Tibial artery (tissue), 4 donors: ENCODE measurements at regions of chr3 and their contacts with region 1.

Region 1: DNA sequence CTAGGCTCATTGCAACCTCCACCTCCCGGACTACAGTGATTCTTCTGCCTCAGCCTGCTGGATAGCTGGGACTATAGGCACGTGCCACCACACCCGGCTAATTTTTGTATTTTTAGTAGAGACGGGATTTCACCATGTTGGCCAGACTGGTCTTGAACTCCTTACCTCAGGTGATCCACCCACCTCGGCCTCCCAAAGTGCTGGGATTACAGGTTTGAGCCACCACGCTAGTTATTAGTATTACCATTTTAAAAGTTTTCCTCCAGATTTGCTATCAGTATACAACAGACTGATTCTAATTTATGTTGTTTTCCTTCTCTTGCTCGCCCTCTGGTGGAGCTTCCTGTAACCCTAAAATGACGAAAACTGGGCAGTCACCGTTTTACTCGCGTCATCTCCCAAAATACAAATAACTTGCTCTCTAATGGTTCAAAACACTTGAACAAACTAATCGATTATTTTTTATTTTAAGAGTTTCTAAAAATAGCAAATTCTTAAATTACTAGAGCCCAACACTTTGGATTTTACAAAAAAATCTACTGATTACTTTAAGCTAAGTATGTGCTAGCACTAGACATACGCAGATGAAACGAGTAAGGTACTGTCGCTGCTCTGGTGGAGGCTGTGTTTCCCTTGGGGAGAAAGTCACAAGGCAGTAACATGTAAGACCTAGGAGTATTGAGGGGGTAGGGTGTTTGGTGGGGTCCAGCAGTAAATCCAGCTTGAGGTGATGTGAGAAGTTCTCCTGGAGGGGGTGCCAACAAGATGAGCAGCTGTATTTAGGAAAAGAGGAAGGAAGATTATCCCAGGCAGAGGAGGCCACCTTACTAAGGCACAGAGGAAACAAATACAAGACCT is 203.3 kb downstream of the MBNL1 start:
- DNase-seq: peak; percentile 80 to 81
- H3K4me3 ChIP-seq: peak overlapping the region; percentile 29 to 34
- H3K27ac ChIP-seq: peak overlapping the region; percentile 39 to 72
- H3K4me1 ChIP-seq: peaks cover 0 to 18% (median 7%) of the 10 kb centered on the region in 4 donors
- H3K27me3 ChIP-seq: no peaks in the 10 kb centered on the region
- CTCF ChIP-seq: peak; percentile 74 to 79

Region 2: GRCh38 chr3:152524198-152525140 is 52.4 kb after region 1 on chr3:
- intact Hi-C with region 1: loop called (anchors 10 kb)
- DNase-seq: peak in 1 of 2 donors; percentile 58
- H3K4me3 ChIP-seq: no peak overlapping the region
- H3K27ac ChIP-seq: no peak overlapping the region
- H3K4me1 ChIP-seq: peaks cover 0 to 4% (median 0%) of the 10 kb centered on the region in 4 donors
- H3K27me3 ChIP-seq: no peaks in the 10 kb centered on the region
- CTCF ChIP-seq: peak; percentile 83 to 86

Region 3: GRCh38 chr3:152671446-152672319 is 199.6 kb after region 1 on chr3:
- intact Hi-C with region 1: no loop called
- DNase-seq: no peak
- H3K4me3 ChIP-seq: no peak overlapping the region
- H3K27ac ChIP-seq: no peak overlapping the region
- H3K4me1 ChIP-seq: no peaks in the 10 kb centered on the region
- H3K27me3 ChIP-seq: peaks cover 0 to 3% of the 10 kb centered on the region in 2 donors
- CTCF ChIP-seq: no peak

Region 4: GRCh38 chr3:152688313-152688712 is 216.3 kb after region 1 on chr3:
- intact Hi-C with region 1: no loop called
- DNase-seq: no peak
- H3K4me3 ChIP-seq: no peak overlapping the region
- H3K27ac ChIP-seq: no peak overlapping the region
- H3K4me1 ChIP-seq: no peaks in the 10 kb centered on the region
- H3K27me3 ChIP-seq: no peaks in the 10 kb centered on the region
- CTCF ChIP-seq: no peak